Activated CD4-positive, alpha-beta T cell treated with anti-CD3 and anti-CD28 coated beads for 36 hours (primary cell): ENCODE measurements at regions of chr11 and their contacts with region 1.

Region 1: GRCh38 chr11:8964324-8965320 is at the start of gene TMEM9B:
- DNase-seq: peak; percentile 90
- ATAC-seq: peak; percentile 87
- H3K4me3 Mint-ChIP-seq: peak within 1 kb of the TSS; percentile 81
- H3K27ac Mint-ChIP-seq: peak within 1 kb of the TSS; percentile 89
- H3K4me1 Mint-ChIP-seq: peaks cover 29% of the 10 kb centered on the region
- H3K27me3 Mint-ChIP-seq: no peaks in the 10 kb centered on the region
- total RNA-seq, gene TMEM9B: 9.9 to 13.1 TPM

Region 2: GRCh38 chr11:8682303-8683114 is 282.1 kb before region 1 on chr11 and contains the starts of genes RPL27A and TRIM66:
- CTCF ChIA-PET with region 1: interaction called, 3 read pairs
- POLR2A ChIA-PET with region 1: no interaction called
- intact Hi-C with region 1: loop called (anchors 1 to 2 kb)
- DNase-seq: peak; percentile 99
- ATAC-seq: peak; percentile 96
- H3K4me3 Mint-ChIP-seq: peak within 1 kb of the TSS; percentile 97
- H3K27ac Mint-ChIP-seq: peak within 1 kb of the TSS; percentile 98
- H3K4me1 Mint-ChIP-seq: peaks cover 46% of the 10 kb centered on the region
- H3K27me3 Mint-ChIP-seq: no peaks in the 10 kb centered on the region
- total RNA-seq, gene RPL27A: 688 to 1,021 TPM
- total RNA-seq, gene TRIM66: 18.3 to 19.5 TPM

Region 3: DNA sequence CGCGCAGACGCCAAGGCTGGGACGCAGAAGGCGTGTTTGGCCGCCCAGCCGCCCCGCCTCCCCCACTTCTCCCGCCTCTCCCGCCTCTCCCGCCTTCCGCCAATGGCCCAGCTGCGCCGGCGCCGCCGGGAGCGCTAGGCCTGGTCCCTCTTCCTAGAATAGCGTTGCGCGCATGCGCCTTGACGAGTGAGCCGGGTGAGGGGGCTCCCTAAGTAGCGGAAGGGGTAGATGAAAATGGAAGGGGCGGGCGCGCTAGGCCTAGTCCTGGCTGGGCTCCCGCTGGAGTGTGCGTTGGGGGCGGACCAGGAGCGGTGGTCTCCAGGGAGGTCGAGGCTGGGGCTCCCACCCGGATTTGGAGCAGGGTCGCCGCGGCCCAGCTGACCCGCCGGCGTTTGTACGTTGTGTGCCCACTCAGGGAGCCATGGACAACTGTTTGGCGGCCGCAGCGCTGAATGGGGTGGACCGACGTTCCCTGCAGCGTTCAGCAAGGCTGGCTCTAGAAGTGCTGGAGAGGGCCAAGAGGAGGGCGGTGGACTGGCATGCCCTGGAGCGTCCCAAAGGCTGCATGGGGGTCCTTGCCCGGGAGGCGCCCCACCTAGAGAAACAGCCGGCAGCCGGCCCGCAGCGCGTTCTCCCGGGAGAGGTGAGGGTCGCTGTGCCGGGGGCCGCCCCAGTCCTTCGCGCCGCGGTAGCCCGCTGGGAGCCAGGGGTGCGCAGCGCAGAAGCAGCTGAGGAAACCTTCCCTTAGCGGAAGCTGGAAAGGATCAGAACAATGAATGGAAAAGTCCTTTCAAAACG is 53.4 kb before region 1 on chr11 and contains the start of gene AKIP1:
- CTCF ChIA-PET with region 1: interaction called, 31 read pairs
- POLR2A ChIA-PET with region 1: interaction called, 4 read pairs
- intact Hi-C with region 1: loop called (anchors 1 kb)
- DNase-seq: peak; percentile 94
- ATAC-seq: peak; percentile 76
- H3K4me3 Mint-ChIP-seq: peak within 1 kb of the TSS; percentile 86
- H3K27ac Mint-ChIP-seq: peak within 1 kb of the TSS; percentile 89
- H3K4me1 Mint-ChIP-seq: peaks cover 45% of the 10 kb centered on the region
- H3K27me3 Mint-ChIP-seq: peaks cover 6% of the 10 kb centered on the region
- total RNA-seq, gene AKIP1: 29.8 to 32.2 TPM

Region 4: DNA sequence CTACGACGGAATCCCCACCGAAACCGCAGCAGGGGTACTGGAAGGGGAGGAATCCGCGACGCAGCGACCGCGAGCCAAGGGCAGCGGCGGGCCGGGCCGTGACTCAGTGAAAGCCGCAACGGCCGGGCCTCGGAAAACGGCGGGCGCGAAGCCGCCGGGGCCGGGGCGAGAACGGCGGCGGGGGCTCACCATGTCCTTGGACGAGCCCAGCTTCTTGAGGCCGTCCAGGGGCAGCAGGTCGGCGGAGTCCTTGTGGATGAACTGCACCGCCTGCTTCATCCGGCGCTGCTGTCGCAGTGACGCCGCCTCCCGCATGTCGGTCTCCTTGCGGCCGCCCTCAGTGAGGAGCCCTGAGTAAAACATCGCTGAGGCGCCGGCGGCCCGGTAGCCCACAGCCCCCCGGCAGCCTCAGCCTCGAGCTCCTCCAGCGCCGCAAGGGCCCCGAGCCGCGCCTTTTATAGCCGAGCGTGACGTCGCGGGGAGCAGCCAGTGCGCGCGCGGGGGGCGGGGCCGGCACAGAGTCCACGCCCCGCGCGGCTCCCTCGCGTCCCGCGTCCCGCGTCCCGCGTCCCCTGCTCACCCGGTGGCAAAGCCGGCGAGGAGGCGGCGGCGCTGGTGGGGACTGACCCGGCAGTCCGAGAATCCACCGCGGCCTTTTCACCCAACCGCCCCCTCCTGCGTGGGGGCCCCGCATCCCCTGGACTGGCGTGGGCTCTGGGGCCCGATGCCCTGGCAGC is 39.1 kb after region 1 on chr11 and contains the start of gene NRIP3:
- CTCF ChIA-PET with region 1: interaction called, 6 read pairs
- POLR2A ChIA-PET with region 1: interaction called, 3 read pairs
- intact Hi-C with region 1: loop called (anchors 1 to 2 kb)
- DNase-seq: peak; percentile 82
- ATAC-seq: peak; percentile 41
- H3K4me3 Mint-ChIP-seq: peak within 1 kb of the TSS; percentile 65
- H3K27ac Mint-ChIP-seq: peak within 1 kb of the TSS; percentile 38
- H3K4me1 Mint-ChIP-seq: peaks cover 27% of the 10 kb centered on the region
- H3K27me3 Mint-ChIP-seq: peaks cover 34% of the 10 kb centered on the region
- total RNA-seq, gene NRIP3: 2.1 to 2.2 TPM

Region 5: GRCh38 chr11:9078113-9079086 is 113.8 kb after region 1 on chr11:
- CTCF ChIA-PET with region 1: no interaction called
- POLR2A ChIA-PET with region 1: no interaction called
- intact Hi-C with region 1: no loop called
- DNase-seq: no peak
- ATAC-seq: no peak
- H3K4me3 Mint-ChIP-seq: no peak overlapping the region
- H3K27ac Mint-ChIP-seq: no peak overlapping the region
- H3K4me1 Mint-ChIP-seq: peaks cover 3% of the 10 kb centered on the region
- H3K27me3 Mint-ChIP-seq: peaks cover 14% of the 10 kb centered on the region

Region 6: DNA sequence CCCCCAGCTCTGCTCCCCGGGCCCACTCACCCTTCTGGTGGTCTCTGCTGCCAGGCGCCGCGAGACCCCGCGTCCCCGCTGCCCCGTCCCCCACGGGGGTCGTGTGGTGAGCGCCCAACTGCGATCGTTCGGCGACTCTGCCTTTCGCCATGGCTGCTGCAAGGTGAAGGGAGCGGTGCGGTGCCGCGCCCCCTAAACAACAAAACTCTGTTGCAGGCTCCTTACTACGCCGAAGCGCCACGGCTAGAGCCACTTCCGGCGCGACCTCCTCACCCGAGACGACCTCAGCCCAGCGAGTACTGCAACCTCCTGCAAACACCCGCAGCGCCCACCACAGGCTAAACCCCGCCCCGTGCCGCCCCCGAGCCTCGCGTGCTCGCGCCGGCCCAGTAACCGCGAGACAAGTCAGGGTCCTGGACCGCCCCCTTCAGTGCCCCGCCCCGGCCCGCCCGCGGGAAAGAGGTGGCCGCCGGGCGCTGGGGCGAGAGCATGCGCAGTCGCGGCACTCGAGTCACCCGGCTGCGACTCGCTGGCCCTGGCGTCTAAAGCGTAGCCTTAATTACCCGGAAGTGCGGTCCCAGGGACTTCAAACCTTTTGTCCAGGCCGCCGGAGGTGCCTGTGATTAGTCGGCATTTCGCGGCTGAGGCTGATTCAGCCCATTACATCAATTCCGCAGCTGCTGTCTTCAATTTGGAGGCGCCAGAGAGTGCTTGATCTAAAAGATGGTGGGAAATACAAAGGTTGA is 349.8 kb after region 1 on chr11 and contains the start of gene TMEM41B:
- CTCF ChIA-PET with region 1: no interaction called
- POLR2A ChIA-PET with region 1: interaction called, 3 read pairs
- intact Hi-C with region 1: loop called in 1 of 2 experiments (anchors 1 kb)
- DNase-seq: peak; percentile 100
- ATAC-seq: peak; percentile 95
- H3K4me3 Mint-ChIP-seq: peak within 1 kb of the TSS; percentile 99
- H3K27ac Mint-ChIP-seq: peak within 1 kb of the TSS; percentile 99
- H3K4me1 Mint-ChIP-seq: peaks cover 36% of the 10 kb centered on the region
- H3K27me3 Mint-ChIP-seq: peaks cover 11% of the 10 kb centered on the region
- total RNA-seq, gene TMEM41B: 20.2 to 29.3 TPM

Region 7: GRCh38 chr11:9573052-9573774 is 608.6 kb after region 1 on chr11 and contains the start of gene WEE1:
- CTCF ChIA-PET with region 1: no interaction called
- POLR2A ChIA-PET with region 1: no interaction called
- intact Hi-C with region 1: loop called in 1 of 2 experiments (anchors 1 kb)
- DNase-seq: peak; percentile 99
- ATAC-seq: peak; percentile 94
- H3K4me3 Mint-ChIP-seq: peak within 1 kb of the TSS; percentile 94
- H3K27ac Mint-ChIP-seq: peak within 1 kb of the TSS; percentile 82
- H3K4me1 Mint-ChIP-seq: peaks cover 33% of the 10 kb centered on the region
- H3K27me3 Mint-ChIP-seq: peaks cover 3% of the 10 kb centered on the region
- total RNA-seq, gene WEE1: 44.8 to 46.5 TPM